ENCODE measurements at regions of chr22 and their contacts with region 1.

Region 1: GRCh38 chr22:39532215-39533071 is at the start of gene RPS19BP1:
- DNase-seq: peak; percentile 100
- ATAC-seq: peak; percentile 88
- H3K4me3 Mint-ChIP-seq: peak within 1 kb of the TSS; percentile 98
- H3K27ac Mint-ChIP-seq: peak within 1 kb of the TSS; percentile 94
- H3K4me1 Mint-ChIP-seq: peaks cover 60% of the 10 kb centered on the region
- H3K27me3 Mint-ChIP-seq: no peaks in the 10 kb centered on the region
- total RNA-seq, gene RPS19BP1: 80.1 to 80.2 TPM

Region 2: GRCh38 chr22:39170825-39171622 is 361.4 kb before region 1 on chr22:
- CTCF ChIA-PET with region 1: interaction called, 17 read pairs
- POLR2A ChIA-PET with region 1: interaction called, 4 read pairs
- DNase-seq: peak; percentile 88
- ATAC-seq: peak; percentile 78
- H3K4me3 Mint-ChIP-seq: peak overlapping the region; percentile 66
- H3K27ac Mint-ChIP-seq: peak overlapping the region; percentile 79
- H3K4me1 Mint-ChIP-seq: peaks cover 43% of the 10 kb centered on the region
- H3K27me3 Mint-ChIP-seq: peaks cover 12% of the 10 kb centered on the region

Region 3: DNA sequence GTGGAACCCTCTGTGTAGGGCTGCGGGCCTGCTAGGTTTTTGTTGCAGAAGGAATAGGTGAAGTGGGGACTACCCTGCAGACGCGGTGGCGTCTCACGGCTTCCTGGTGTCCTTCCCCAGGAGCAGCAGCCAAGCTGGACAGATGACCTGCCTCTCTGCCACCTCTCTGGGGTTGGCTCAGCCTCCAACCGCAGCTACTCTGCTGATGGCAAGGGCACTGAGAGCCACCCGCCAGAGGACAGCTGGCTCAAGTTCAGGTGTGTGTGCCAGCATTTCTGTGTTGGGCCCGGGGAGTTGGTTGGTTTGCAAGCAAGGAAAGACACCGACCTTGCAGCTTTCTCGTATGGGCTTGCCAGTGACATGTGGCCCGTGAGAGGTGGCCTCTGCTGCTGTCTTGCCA is 117.6 kb before region 1 on chr22:
- CTCF ChIA-PET with region 1: interaction called, 13 read pairs
- POLR2A ChIA-PET with region 1: no interaction called
- DNase-seq: no peak
- ATAC-seq: no peak
- H3K4me3 Mint-ChIP-seq: no peak overlapping the region
- H3K27ac Mint-ChIP-seq: peak overlapping the region; percentile 20
- H3K4me1 Mint-ChIP-seq: peaks cover 44% of the 10 kb centered on the region
- H3K27me3 Mint-ChIP-seq: no peaks in the 10 kb centered on the region

Region 4: DNA sequence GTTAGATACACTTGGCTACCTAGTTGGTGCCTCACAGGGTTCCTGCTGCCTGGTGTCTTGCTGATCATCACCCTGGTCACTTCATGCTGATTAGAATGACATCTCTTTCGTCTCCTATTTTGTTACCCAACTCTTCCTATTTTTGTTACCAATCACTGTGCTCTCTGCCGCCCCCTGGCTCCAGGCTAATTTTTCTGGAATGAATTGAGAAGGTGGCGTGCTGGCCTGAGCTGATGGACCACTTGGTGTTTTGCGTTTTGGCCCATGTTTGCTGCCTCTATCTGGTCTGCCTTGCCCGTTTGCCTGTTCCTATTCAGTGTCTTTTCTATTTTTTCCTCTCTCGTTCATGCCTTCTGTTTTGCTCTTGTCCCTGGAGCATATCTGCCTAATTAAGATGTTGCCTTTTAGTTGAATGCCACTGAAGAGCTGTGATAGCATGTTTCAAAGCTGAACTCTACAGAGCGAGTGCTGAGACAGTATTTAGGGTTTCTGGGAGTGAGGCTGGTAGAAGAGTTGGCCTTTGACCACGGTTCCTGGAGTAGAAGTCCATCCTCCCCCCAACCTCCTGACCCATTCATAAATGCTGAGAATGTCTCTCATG is 18.0 kb before region 1 on chr22:
- CTCF ChIA-PET with region 1: interaction called, 81 read pairs
- POLR2A ChIA-PET with region 1: interaction called, 75 read pairs
- DNase-seq: peak; percentile 68
- ATAC-seq: no peak
- H3K4me3 Mint-ChIP-seq: no peak overlapping the region
- H3K27ac Mint-ChIP-seq: peak overlapping the region; percentile 28
- H3K4me1 Mint-ChIP-seq: peaks cover 40% of the 10 kb centered on the region
- H3K27me3 Mint-ChIP-seq: no peaks in the 10 kb centered on the region

Region 5: GRCh38 chr22:39932918-39933649 is 400.6 kb after region 1 on chr22:
- CTCF ChIA-PET with region 1: interaction called, 15 read pairs
- POLR2A ChIA-PET with region 1: no interaction called
- DNase-seq: peak; percentile 83
- ATAC-seq: peak; percentile 40
- H3K4me3 Mint-ChIP-seq: peak overlapping the region; percentile 68
- H3K27ac Mint-ChIP-seq: peak overlapping the region; percentile 85
- H3K4me1 Mint-ChIP-seq: peaks cover 56% of the 10 kb centered on the region
- H3K27me3 Mint-ChIP-seq: no peaks in the 10 kb centered on the region

Region 6: DNA sequence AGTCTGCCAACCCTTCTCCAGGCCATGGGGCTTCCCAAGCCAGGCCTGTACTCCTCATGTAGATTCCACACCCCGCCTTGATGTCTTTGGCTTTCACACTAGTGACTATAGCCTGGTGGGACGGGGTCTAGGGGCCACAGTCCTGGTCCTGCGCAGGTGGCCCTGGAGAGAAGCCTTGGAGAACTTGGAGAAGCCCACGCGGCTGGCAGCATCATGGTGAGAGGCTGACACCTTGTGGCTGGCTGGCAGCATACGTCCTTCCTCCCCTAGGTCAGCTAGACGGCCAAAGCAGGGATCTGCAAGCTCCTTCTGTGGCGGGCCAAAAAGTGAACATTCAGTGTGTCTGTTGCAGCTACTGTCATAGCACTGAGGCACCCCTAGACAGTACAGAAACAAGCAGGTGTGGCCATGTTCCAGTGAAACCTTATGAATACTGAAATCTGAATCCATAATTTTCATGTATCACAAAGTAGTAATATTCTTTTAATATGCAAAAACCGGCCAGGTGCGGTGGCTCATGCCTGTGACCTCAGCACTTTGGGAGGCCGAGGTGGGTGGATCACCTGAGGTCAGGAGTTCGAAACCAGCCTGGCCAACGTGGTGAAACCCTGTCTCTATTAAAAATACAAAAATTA is 504.3 kb after region 1 on chr22:
- CTCF ChIA-PET with region 1: interaction called, 28 read pairs
- POLR2A ChIA-PET with region 1: no interaction called
- DNase-seq: peak; percentile 73
- ATAC-seq: peak; percentile 76
- H3K4me3 Mint-ChIP-seq: no peak overlapping the region
- H3K27ac Mint-ChIP-seq: no peak overlapping the region
- H3K4me1 Mint-ChIP-seq: peaks cover 31% of the 10 kb centered on the region
- H3K27me3 Mint-ChIP-seq: peaks cover 8% of the 10 kb centered on the region

Measured in activated CD8-positive, alpha-beta T cell treated with anti-CD3 and anti-CD28 coated beads, Interleukin-2, amount 10 ng/mL, durations not matched to agents 7 days and 5 days (primary cell).